ENCODE measurements at regions of chr12 and their contacts with region 1.

Region 1: GRCh38 chr12:6323340-6323994 is 13.0 kb downstream of the PLEKHG6 start:
- DNase-seq: peak; percentile 45
- ATAC-seq: peak; percentile 59
- H3K4me3 Mint-ChIP-seq: peak overlapping the region; percentile 62
- H3K27ac Mint-ChIP-seq: peak overlapping the region; percentile 98
- H3K4me1 Mint-ChIP-seq: peaks cover 64% of the 10 kb centered on the region
- H3K27me3 Mint-ChIP-seq: no peaks in the 10 kb centered on the region
- CTCF ChIP-seq: no peak

Region 2: DNA sequence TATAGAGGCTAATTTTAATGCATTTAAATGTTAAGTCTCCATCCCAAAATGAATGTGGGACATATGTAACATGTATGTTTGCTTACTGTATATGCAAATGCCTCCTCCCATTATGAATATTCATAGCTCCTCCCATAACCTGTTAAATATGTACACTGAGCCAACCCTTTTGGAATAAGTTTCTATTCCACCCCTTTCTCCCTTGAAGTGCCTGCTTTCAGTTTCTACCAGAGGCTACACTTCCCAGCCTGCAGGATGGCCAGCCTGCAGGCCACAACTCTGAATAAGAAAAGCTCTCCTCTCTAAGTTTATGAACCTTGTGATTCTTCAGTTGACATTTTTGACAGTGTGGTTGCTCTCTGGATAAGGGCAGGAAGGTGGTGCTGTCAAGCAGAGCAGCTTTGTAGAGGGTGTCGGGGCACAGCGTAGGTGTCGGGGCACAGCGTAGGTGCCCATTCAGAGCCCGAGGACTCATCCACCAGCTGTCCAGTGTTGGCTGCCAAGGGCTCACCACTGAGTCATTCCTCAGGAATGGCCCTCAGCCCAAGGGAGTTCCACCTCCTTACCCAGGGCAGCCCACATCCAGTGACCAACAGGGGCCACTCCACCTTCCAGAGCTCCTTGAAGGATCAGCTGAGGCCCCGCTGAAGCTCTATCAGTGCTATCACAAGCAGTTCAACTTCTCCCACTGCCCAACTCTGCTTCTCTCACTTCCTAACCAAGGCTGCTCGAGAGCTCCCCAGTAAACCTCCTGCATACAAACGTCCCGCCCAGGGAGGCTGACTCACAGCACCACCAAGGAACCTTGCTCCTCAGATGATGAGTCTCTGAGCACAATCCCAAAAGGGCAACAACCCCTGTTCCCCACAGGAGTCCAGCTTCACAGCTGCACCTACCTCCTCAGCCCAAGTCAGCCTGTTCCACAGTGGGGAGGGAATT is 230.4 kb before region 1 on chr12:
- CTCF ChIA-PET with region 1: no interaction called
- POLR2A ChIA-PET with region 1: no interaction called
- DNase-seq: no peak
- ATAC-seq: no peak; the same call in 1 of the 2 replicates
- H3K4me3 Mint-ChIP-seq: no peak overlapping the region
- H3K27ac Mint-ChIP-seq: no peak overlapping the region
- H3K4me1 Mint-ChIP-seq: peaks cover 21% of the 10 kb centered on the region
- H3K27me3 Mint-ChIP-seq: peaks cover 21% of the 10 kb centered on the region
- CTCF ChIP-seq: no peak

Region 3: DNA sequence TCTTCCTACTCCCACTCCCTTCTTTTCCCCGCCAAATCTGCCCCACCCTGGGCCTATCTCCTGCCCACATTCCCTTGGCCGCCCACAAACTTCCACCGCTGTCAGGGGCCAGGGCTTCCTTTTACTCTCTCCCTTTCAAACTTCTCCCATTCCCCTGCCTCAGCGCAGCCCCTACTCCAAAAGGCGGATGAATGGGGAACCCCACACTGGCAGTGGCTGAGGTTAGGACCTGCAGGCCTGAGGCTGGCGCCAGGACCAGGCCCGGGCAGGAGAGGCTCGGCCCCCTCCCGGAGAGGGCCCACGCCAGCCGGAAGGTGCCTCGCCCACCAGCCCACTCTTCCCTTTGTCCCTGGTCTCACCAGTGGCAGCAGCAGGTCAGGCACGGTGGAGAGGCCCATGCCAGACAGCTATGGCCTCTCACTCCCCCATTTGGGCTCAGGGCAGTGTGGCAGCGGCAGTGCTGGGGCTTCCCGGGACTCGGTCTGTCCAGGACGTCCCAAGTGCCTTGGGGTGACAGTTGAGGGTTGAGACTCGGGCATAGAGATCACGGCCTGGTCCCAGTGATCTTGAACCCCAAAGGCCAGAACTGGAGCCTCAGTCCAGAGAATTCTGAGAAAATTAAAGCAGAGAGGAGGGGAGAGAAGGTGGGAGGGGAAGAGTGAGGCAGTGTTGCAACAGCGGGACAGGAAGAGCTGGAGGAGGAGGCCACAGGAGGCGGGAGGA is 18.1 kb after region 1 on chr12 and contains the start of gene TNFRSF1A:
- CTCF ChIA-PET with region 1: interaction called, 41 read pairs
- POLR2A ChIA-PET with region 1: interaction called, 16 read pairs
- DNase-seq: no peak
- ATAC-seq: peak; percentile 47
- H3K4me3 Mint-ChIP-seq: no peak within 1 kb of the TSS
- H3K27ac Mint-ChIP-seq: peak within 1 kb of the TSS; percentile 86
- H3K4me1 Mint-ChIP-seq: peaks cover 32% of the 10 kb centered on the region
- H3K27me3 Mint-ChIP-seq: no peaks in the 10 kb centered on the region
- CTCF ChIP-seq: no peak
- total RNA-seq, gene TNFRSF1A: 32.3 to 44.1 TPM (median 32.4 TPM) in 3 replicates

Region 4: GRCh38 chr12:6367065-6367968 is 43.9 kb after region 1 on chr12:
- CTCF ChIA-PET with region 1: interaction called, 21 read pairs
- POLR2A ChIA-PET with region 1: interaction called, 4 read pairs
- DNase-seq: no peak
- ATAC-seq: no peak
- H3K4me3 Mint-ChIP-seq: no peak overlapping the region
- H3K27ac Mint-ChIP-seq: peak overlapping the region; percentile 33; the same call in 1 of the 2 replicates
- H3K4me1 Mint-ChIP-seq: peaks cover 58% of the 10 kb centered on the region
- H3K27me3 Mint-ChIP-seq: no peaks in the 10 kb centered on the region
- CTCF ChIP-seq: no peak

Region 5: DNA sequence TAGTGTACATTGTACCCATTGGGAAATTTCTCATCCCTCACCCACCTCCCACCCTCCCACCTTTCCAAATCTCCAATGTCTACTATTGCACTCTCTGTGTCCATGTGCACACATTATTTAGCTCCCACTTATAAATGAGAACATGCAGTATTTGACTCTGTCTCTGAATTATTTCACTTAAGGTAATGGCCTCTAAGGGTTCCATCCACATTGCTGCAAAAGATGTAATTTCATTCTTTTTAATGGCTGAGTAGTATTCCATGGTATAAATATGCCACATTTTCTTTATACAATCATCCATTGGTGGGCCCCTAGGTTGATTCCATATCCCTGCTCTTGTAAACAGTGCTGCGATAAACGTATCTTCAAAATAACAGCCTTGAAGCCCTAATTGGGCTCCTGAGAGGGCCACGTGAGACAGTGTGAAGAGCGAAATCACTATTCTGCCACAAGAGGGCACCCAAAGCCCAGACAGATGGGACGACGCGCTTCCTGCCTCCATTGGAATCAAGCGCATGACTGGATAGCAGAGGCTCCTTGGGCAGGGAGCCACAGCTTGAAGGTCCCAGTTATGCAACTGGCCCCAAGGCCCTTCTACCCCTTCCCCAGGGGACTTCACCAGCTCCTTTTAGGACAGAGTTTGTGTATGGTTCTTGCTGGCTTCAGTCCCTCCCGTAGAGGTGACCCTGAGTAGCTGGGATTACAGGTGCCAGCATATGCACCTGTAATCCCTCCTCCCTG is 100.0 kb after region 1 on chr12:
- CTCF ChIA-PET with region 1: interaction called, 12 read pairs
- POLR2A ChIA-PET with region 1: no interaction called
- DNase-seq: peak; percentile 77
- ATAC-seq: peak; percentile 96
- H3K4me3 Mint-ChIP-seq: no peak overlapping the region
- H3K27ac Mint-ChIP-seq: no peak overlapping the region
- H3K4me1 Mint-ChIP-seq: peaks cover 8% of the 10 kb centered on the region
- H3K27me3 Mint-ChIP-seq: no peaks in the 10 kb centered on the region; the same call in none of the 2 replicates
- CTCF ChIP-seq: peak; percentile 83; the same call in 1 of the 2 replicates